HepG2 (cell line): ENCODE measurements at regions of chr13 and their contacts with region 1.

Region 1: DNA sequence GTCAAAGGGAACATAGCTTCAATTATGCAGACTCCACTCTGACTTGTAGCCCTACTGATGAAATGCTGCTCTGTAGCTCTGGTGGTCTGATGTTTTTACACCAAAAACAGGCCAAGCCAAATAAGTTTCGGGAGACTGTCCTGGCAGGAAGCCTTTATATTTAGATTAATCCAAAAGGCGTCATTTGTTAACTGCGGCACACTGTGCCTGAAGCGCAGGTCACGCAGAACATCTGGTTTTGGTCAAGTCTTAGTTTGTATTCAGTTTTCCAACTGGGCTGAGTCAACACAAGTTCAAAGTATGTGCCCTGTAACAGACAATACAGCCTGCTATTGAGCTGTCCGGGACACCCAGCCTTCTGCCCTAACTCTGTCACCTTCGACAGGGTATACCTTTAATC is 154.6 kb upstream of the IPO5 start:
- DNase-seq: no peak
- ATAC-seq: no peak
- H3K4me3 ChIP-seq: no peak overlapping the region
- H3K27ac ChIP-seq: no peak overlapping the region
- H3K4me1 ChIP-seq: no peaks in the 10 kb centered on the region
- H3K27me3 ChIP-seq: no peaks in the 10 kb centered on the region; a peak in 1 of 5 replicates
- CTCF ChIP-seq: no peak
- EP300 ChIP-seq: no peak
- POLR2A ChIP-seq: no peak
- RAD21 ChIP-seq: no peak

Region 2: DNA sequence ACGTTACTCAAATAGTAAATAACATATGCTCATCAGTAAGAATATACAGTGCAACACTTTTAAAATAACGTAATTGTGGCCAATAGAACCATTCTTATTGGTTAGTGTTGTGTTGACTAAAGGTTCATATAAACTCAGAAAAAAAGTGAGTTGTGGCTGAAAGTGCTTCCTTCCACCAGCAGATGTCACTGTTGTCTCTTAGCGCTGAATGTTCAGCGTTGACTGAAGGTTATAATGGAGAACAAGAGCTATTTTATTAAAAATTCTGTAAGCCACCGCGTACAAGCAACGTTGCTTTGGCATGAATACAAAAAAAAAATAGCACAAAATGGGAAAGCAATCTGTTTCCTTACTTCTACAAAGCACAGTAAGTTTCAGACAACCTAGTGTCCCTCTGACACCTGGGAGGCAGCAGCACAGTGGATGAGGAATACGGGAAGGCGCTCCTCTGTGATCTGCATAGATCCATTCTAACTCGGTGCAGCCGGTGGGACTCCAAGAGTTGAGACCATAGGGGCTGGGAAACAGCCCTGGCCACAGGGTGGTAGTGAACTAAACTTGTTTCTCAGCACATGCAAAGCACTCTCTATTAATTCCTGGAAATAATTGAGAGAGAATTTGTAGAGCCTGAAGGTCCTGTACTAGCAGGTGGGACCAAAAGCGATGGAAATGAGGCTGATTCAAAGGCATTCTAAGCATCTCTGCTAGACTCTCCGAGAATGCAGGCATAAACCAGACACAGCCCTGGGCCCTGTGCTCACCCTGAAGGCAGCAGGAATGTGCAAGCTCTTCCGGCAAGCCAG is 780.6 kb before region 1 on chr13:
- CTCF ChIA-PET with region 1: interaction called, 3 read pairs
- POLR2A ChIA-PET with region 1: no interaction called
- in situ Hi-C with region 1: loop called (anchors 25 kb)
- intact Hi-C with region 1: loop called (anchors 1 kb)
- DNase-seq: peak; percentile 36
- ATAC-seq: peak; percentile 85
- H3K4me3 ChIP-seq: no peak overlapping the region
- H3K27ac ChIP-seq: no peak overlapping the region
- H3K4me1 ChIP-seq: no peaks in the 10 kb centered on the region
- H3K27me3 ChIP-seq: peaks cover 1 to 8% of the 10 kb centered on the region in 2 experiments; a peak in 1 of 5 replicates
- CTCF ChIP-seq: peak; percentile 81
- EP300 ChIP-seq: no peak
- POLR2A ChIP-seq: no peak
- RAD21 ChIP-seq: no peak

Region 3: DNA sequence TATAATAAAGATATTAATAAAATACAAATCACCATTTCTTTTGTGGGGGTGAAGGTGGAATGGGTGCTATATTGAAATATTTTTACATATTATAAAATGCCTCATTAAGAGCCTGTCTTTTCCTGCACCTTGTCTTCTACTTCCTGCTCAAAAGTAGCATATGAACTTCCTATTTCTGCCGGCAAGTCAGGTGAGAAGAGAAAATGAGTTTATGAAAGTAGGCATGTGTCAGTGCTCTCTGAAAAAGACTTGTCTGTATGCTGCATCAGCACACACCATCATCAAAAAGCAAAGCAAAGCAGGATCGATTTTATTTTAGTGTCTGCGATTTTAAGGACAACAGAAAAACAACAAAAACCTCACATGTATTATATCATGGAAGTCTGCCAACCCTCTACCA is 250.7 kb before region 1 on chr13:
- CTCF ChIA-PET with region 1: no interaction called
- POLR2A ChIA-PET with region 1: no interaction called
- in situ Hi-C with region 1: no loop called
- intact Hi-C with region 1: no loop called
- DNase-seq: no peak
- ATAC-seq: no peak
- H3K4me3 ChIP-seq: no peak overlapping the region
- H3K27ac ChIP-seq: no peak overlapping the region
- H3K4me1 ChIP-seq: no peaks in the 10 kb centered on the region
- H3K27me3 ChIP-seq: no peaks in the 10 kb centered on the region
- CTCF ChIP-seq: no peak
- EP300 ChIP-seq: no peak
- POLR2A ChIP-seq: no peak
- RAD21 ChIP-seq: no peak